CD14-positive monocyte (primary cell): ENCODE measurements at regions of chr19 and their contacts with region 1.

Region 1: GRCh38 chr19:14369399-14370168 is 11.7 kb upstream of the ADGRE5 start:
- DNase-seq: peak; percentile 79 to 93 (median 87)
- H3K4me3 ChIP-seq: peak overlapping the region in 2 of 3 experiments; percentile 0 to 66
- H3K4me3 Mint-ChIP-seq: peak overlapping the region; percentile 72 to 86
- H3K27ac ChIP-seq: peak overlapping the region; percentile 82 to 97
- H3K27ac Mint-ChIP-seq: peak overlapping the region; percentile 97 to 99 (median 98)
- H3K4me1 ChIP-seq: peaks cover 87 to 88% of the 10 kb centered on the region in 2 donors
- H3K4me1 Mint-ChIP-seq: peaks cover 78% of the 10 kb centered on the region
- H3K27me3 ChIP-seq: no peaks in the 10 kb centered on the region
- H3K27me3 Mint-ChIP-seq: peaks cover 0 to 6% (median 0%) of the 10 kb centered on the region in 3 donors
- CTCF ChIP-seq: no peak

Region 2: DNA sequence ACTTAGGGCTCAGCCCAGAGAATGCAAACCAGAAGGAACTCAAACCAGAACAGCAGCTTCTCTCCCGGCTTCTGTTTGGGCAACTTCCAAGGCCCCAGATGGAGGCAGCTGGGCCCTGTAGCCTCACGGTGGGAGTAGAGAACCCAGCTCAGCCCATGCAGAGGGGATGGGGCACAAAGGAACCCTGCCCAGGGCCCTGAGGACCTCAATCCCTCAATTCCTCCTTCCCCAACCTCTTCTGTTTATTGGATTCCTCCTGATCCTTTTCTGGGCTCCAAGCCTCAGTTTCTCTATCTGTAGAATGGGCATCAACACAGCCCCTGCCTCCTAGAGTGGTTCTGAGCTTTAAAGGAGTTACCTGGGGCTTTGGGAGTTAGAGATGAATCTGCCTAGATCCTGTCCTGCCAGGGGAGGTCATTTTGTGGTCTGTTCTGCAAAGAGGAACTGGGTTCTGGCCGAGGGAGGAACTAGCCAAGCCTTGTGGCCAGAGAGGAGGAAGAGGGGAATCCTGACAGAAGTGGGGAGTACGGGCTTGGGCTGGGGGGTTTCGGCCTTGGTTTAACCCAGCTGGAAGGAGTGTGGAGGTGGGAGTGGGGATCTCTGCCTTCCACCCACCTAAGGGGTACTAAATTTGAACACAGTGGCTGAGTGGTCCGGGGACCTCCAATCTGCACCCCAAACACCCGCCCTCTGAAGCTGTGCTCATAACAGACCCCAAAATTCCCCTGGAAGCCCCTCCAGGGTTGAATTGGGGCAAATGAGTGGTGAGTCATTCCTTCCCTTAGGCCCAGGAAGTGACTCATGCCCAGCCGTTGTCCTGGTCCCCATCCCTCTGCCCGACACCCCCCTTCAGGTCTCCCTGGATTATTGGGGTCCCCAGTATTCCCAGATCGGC is 14.3 kb after region 1 on chr19:
- intact Hi-C with region 1: loop called in 1 of 2 experiments (anchors 2 kb)
- DNase-seq: peak; percentile 81 to 93 (median 87)
- H3K4me3 ChIP-seq: peak overlapping the region; percentile 86 to 93 (median 89)
- H3K4me3 Mint-ChIP-seq: peak overlapping the region; percentile 91 to 99
- H3K27ac ChIP-seq: peak overlapping the region; percentile 97
- H3K27ac Mint-ChIP-seq: peak overlapping the region; percentile 90 to 99 (median 98)
- H3K4me1 ChIP-seq: peaks cover 72 to 76% of the 10 kb centered on the region in 2 donors
- H3K4me1 Mint-ChIP-seq: peaks cover 61% of the 10 kb centered on the region
- H3K27me3 ChIP-seq: no peaks in the 10 kb centered on the region
- H3K27me3 Mint-ChIP-seq: peaks cover 0 to 3% (median 0%) of the 10 kb centered on the region in 3 donors
- CTCF ChIP-seq: no peak

Region 3: GRCh38 chr19:14425696-14426138 is 56.1 kb after region 1 on chr19:
- intact Hi-C with region 1: no loop called
- DNase-seq: no peak
- H3K4me3 ChIP-seq: no peak overlapping the region
- H3K4me3 Mint-ChIP-seq: no peak overlapping the region
- H3K27ac ChIP-seq: no peak overlapping the region
- H3K27ac Mint-ChIP-seq: no peak overlapping the region
- H3K4me1 ChIP-seq: peaks cover 24 to 26% of the 10 kb centered on the region in 2 donors
- H3K4me1 Mint-ChIP-seq: peaks cover 24% of the 10 kb centered on the region
- H3K27me3 ChIP-seq: peaks cover 0 to under 1% of the 10 kb centered on the region in 2 donors
- H3K27me3 Mint-ChIP-seq: peaks cover 4 to 12% (median 4%) of the 10 kb centered on the region in 3 donors
- CTCF ChIP-seq: no peak

Region 4: GRCh38 chr19:14786421-14786851 is 416.9 kb after region 1 on chr19:
- intact Hi-C with region 1: loop called in 1 of 2 experiments (anchors 10 kb)
- DNase-seq: peak in 2 of 3 donors; percentile 41 to 73
- H3K4me3 ChIP-seq: peak overlapping the region in 1 of 3 experiments; percentile 24
- H3K4me3 Mint-ChIP-seq: peak overlapping the region in 1 of 2 donors; percentile 55
- H3K27ac ChIP-seq: peak overlapping the region; percentile 92 to 95
- H3K27ac Mint-ChIP-seq: peak overlapping the region; percentile 98 to 100 (median 99)
- H3K4me1 ChIP-seq: peaks cover 54 to 61% of the 10 kb centered on the region in 2 donors
- H3K4me1 Mint-ChIP-seq: peaks cover 54% of the 10 kb centered on the region
- H3K27me3 ChIP-seq: no peaks in the 10 kb centered on the region
- H3K27me3 Mint-ChIP-seq: peaks cover 0 to 11% (median 2%) of the 10 kb centered on the region in 3 donors
- CTCF ChIP-seq: peak; percentile 97